ENCODE measurements at regions of chr2 and their contacts with region 1.

Region 1: DNA sequence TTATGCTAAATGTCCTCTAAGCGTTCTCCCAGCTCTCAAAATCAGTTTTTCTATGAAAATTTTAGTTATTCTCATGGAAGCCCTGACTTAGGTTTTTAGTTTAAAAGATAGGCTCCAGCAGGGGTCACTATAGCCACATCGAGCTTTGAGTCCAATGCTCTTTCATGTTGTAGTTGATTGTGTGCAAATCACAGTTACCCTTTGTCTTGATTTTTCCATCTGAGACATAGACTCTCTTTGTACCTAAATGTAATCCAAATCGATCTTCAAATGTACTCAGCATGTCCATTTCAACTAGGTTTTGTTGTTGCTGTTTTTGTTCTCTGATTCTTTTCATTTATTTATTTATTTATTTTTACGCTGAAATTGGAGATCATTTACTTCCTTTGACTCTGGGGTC is 26.4 kb upstream of the MSTN start:
- DNase-seq: peak; percentile 24
- H3K4me3 ChIP-seq: no peak overlapping the region
- H3K27ac ChIP-seq: no peak overlapping the region
- H3K27me3 ChIP-seq: no peaks in the 10 kb centered on the region
- CTCF ChIP-seq: peak; percentile 80

Region 2: DNA sequence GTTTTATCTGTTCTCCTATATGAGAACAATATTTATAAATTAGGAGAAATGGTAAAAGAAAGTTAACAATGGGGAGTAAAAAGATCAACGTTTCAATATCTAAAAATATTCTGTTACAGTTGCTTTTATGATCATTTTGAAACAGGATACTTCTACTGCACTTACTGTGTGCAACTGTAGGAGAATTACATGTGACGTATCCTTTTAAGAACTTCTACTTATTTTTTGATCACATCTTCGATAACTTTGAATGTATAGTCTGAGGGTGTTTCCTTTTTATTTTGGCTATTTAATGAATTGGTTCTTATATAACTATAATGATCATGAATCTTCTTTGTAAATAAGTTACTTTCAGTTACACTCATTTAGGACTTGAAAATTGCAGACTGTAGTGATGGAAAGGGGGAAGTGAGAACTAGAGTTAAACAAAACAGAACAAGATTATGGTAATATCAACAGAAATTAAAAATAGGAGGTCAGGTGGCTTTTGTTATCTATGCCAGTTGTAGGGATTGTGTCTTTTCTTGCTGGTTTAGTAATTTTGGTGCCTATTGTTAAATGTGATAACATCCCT is 136.3 kb before region 1 on chr2:
- CTCF ChIA-PET with region 1: no interaction called
- POLR2A ChIA-PET with region 1: no interaction called
- DNase-seq: no peak
- H3K4me3 ChIP-seq: no peak overlapping the region
- H3K27ac ChIP-seq: no peak overlapping the region
- H3K27me3 ChIP-seq: no peaks in the 10 kb centered on the region
- CTCF ChIP-seq: no peak

Region 3: GRCh38 chr2:190099890-190100697 is 11.2 kb after region 1 on chr2:
- CTCF ChIA-PET with region 1: interaction called, 19 read pairs
- POLR2A ChIA-PET with region 1: no interaction called
- DNase-seq: no peak
- H3K4me3 ChIP-seq: no peak overlapping the region
- H3K27ac ChIP-seq: no peak overlapping the region
- H3K27me3 ChIP-seq: no peaks in the 10 kb centered on the region
- CTCF ChIP-seq: no peak

Region 4: DNA sequence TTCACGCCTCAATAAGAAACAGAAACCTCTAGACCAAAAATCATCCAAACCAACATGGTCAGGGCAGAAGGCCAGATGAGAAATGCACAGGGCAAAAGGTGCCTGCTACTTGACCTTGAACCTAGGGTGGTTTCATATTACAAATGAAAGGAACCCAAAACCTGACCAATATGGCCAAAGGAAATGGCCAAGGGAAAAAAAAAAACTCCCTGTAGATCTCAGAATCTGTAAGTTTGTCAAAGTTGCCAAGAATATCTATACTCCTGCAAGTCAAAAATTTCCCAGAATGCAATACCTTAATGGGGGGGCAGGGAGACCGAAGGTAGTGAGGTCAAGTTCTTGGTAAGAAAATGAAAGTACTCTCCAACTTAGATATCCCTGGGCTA is 183.5 kb after region 1 on chr2:
- CTCF ChIA-PET with region 1: interaction called, 31 read pairs
- POLR2A ChIA-PET with region 1: interaction called, 3 read pairs
- DNase-seq: no peak
- H3K4me3 ChIP-seq: no peak overlapping the region
- H3K27ac ChIP-seq: no peak overlapping the region
- H3K27me3 ChIP-seq: no peaks in the 10 kb centered on the region
- CTCF ChIP-seq: no peak

Region 5: DNA sequence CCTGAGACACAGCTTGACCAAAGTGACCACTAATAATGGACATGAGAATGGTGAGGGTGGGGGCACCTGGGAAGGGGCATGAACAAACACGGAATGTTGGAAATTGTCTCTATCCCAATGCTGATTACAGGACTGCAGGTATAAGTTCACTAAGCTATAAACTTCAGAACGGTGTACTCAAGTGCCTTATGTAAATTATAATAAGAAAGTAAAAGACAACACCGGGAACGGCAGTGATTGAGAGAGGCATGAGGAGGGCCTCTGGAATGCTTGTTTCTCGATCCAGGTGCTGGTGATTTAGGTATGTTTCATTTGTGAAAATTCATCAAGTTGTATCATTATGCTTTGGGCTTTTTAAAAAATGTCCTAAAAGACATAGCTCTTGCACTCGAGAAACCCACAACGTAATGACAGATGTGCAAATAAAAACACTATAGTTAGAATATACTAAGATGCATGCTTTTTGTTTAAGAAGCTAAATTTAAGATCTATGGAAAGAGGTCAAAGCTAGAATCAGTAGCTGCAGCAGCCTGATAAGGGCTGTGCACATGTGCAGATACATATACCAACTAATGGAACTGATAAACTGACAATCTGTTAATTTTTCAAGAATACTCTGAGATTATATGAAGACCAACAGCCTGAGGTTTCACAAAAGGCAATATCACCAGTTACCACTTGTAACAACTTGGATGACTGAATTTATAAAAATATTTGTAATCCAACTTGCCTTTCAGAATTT is 223.1 kb after region 1 on chr2:
- CTCF ChIA-PET with region 1: interaction called, 39 read pairs
- POLR2A ChIA-PET with region 1: no interaction called
- DNase-seq: no peak
- H3K4me3 ChIP-seq: no peak overlapping the region
- H3K27ac ChIP-seq: no peak overlapping the region
- H3K27me3 ChIP-seq: no peaks in the 10 kb centered on the region
- CTCF ChIP-seq: no peak

Region 6: DNA sequence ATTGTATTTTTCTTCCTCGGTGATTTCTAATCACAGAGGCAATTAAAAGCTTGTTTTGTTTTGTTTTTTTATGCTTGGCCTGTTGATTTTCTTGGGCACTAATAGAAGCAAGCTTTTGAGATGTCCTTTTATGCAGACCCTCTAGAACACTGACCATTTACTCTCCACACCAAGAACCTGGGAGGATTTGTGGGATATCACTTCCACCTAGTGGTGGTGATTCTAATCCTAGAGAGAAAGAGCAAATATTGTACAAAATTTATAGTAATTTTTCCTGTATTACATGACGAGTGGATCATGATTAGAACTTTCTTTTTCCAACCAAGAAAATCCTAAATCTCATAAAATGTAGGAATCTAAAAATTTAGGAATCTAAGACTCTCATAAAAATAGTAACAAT is 422.2 kb after region 1 on chr2:
- CTCF ChIA-PET with region 1: interaction called, 11 read pairs
- POLR2A ChIA-PET with region 1: no interaction called
- DNase-seq: no peak
- H3K4me3 ChIP-seq: no peak overlapping the region
- H3K27ac ChIP-seq: no peak overlapping the region
- H3K27me3 ChIP-seq: no peaks in the 10 kb centered on the region
- CTCF ChIP-seq: peak; percentile 65

Measured in AG04450 (cell line).